ENCODE measurements at regions of chr12 and their contacts with region 1.

Region 1: GRCh38 chr12:47837190-47838171 is 17.8 kb upstream of the HDAC7 start:
- DNase-seq: peak; percentile 70
- H3K4me3 Mint-ChIP-seq: no peak overlapping the region
- H3K27ac Mint-ChIP-seq: no peak overlapping the region
- H3K4me1 Mint-ChIP-seq: peaks cover 61% of the 10 kb centered on the region
- H3K27me3 Mint-ChIP-seq: no peaks in the 10 kb centered on the region

Region 2: GRCh38 chr12:47672068-47672467 is 165.4 kb before region 1 on chr12:
- CTCF ChIA-PET with region 1: no interaction called
- POLR2A ChIA-PET with region 1: no interaction called
- DNase-seq: no peak
- H3K4me3 Mint-ChIP-seq: no peak overlapping the region
- H3K27ac Mint-ChIP-seq: no peak overlapping the region
- H3K4me1 Mint-ChIP-seq: peaks cover 13% of the 10 kb centered on the region
- H3K27me3 Mint-ChIP-seq: no peaks in the 10 kb centered on the region

Region 3: DNA sequence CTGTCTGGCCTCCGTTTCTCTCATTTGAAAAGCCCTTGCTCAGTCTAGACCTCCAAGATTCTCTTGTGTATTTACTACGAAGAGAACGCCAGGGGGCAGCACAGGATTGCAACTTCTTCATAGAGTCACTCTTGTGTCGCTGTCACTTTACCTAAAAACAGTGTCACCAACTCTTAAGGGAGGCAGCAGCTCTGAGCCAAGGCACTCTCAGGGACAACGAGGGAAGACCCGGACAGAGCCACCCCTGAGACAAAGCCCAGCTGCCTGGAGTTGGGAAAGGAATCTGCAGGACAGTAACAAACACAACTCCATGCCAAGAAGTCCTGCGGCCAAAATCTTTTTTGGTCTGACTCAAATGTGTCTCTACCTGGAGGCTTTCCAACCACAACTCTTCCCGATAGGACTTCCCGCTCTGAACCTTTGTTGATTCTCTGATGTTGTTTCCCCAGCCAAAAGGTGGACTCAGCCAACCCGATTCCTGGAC is 122.0 kb before region 1 on chr12:
- CTCF ChIA-PET with region 1: interaction called, 19 read pairs
- POLR2A ChIA-PET with region 1: interaction called, 9 read pairs
- DNase-seq: peak; percentile 81
- H3K4me3 Mint-ChIP-seq: no peak overlapping the region
- H3K27ac Mint-ChIP-seq: no peak overlapping the region
- H3K4me1 Mint-ChIP-seq: peaks cover 22% of the 10 kb centered on the region
- H3K27me3 Mint-ChIP-seq: no peaks in the 10 kb centered on the region

Region 4: GRCh38 chr12:47773062-47773857 is 64.2 kb before region 1 on chr12 and contains the start of gene SLC48A1:
- CTCF ChIA-PET with region 1: interaction called, 284 read pairs
- POLR2A ChIA-PET with region 1: interaction called, 55 read pairs
- DNase-seq: peak; percentile 75
- H3K4me3 Mint-ChIP-seq: peak within 1 kb of the TSS; percentile 91
- H3K27ac Mint-ChIP-seq: peak within 1 kb of the TSS; percentile 36
- H3K4me1 Mint-ChIP-seq: peaks cover 45% of the 10 kb centered on the region
- H3K27me3 Mint-ChIP-seq: peaks cover 5% of the 10 kb centered on the region
- total RNA-seq, gene SLC48A1: 19.4 to 22.6 TPM

Region 5: GRCh38 chr12:47812797-47813510 is 24.5 kb before region 1 on chr12:
- CTCF ChIA-PET with region 1: interaction called, 578 read pairs
- POLR2A ChIA-PET with region 1: interaction called, 1,018 read pairs
- DNase-seq: peak; percentile 96
- H3K4me3 Mint-ChIP-seq: peak overlapping the region; percentile 89
- H3K27ac Mint-ChIP-seq: peak overlapping the region; percentile 93
- H3K4me1 Mint-ChIP-seq: peaks cover 82% of the 10 kb centered on the region
- H3K27me3 Mint-ChIP-seq: no peaks in the 10 kb centered on the region

Region 6: DNA sequence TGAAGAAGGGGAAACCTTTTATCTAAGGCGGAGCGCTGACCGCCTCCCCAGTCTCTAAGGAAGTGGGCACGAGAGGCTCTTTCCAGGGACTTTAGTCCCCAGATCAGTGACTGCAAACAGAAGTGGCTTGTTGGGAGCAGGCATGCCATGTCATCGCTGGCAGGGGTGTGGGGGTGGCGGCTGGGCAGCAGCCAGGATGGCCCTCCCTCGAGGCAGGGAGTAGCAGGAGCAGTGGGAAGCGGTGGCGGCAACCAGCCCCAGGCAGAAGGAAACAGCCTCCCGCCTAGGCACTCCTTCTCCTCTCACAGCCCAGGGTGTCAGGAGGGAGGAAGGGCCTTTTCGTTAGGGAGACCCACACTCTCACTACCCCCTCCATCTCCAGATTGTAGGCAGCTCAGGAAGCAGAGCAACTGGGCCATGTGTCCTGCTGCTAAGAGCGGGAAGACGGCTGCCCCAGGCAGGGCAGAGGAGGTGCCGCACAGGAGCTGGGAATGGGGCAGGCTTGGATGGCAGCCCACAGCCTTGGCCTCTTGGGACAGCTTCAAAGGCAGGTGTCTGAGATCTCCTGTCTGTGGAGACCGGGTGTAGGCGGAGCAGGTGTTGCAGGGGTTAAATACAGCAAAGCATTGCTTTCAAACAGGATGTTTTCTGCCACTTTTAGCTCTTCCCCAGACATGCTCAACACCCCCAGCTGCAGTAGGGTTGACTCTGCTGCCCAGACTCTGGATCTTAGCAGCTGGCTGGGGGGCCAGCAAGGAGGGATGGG is 45.5 kb after region 1 on chr12:
- CTCF ChIA-PET with region 1: interaction called, 28 read pairs
- POLR2A ChIA-PET with region 1: interaction called, 17 read pairs
- DNase-seq: peak; percentile 59
- H3K4me3 Mint-ChIP-seq: peak overlapping the region; percentile 80
- H3K27ac Mint-ChIP-seq: peak overlapping the region; percentile 98
- H3K4me1 Mint-ChIP-seq: peaks cover 83% of the 10 kb centered on the region
- H3K27me3 Mint-ChIP-seq: no peaks in the 10 kb centered on the region

Region 7: DNA sequence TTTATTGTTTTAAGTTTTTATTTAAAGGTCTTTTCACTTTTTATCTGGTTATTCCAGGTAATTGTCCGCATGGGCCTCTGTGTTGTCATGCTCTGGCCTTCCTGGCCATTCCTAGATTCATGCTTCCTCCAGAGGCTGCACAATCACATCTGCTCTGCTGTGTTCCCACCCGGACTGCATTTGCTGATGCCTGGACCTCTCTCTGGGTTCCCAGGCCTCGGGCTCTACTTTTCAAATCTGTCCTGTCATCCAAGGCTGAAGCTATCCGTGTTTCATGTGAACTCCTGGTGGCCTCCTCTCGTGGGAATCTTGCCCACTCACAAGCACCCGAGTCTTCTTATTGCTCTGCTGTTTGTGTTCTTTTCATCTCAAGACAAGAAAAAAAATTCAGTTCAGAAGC is 83.4 kb after region 1 on chr12:
- CTCF ChIA-PET with region 1: no interaction called
- POLR2A ChIA-PET with region 1: no interaction called
- DNase-seq: no peak
- H3K4me3 Mint-ChIP-seq: no peak overlapping the region
- H3K27ac Mint-ChIP-seq: no peak overlapping the region
- H3K4me1 Mint-ChIP-seq: peaks cover 1% of the 10 kb centered on the region
- H3K27me3 Mint-ChIP-seq: peaks cover 39% of the 10 kb centered on the region

Measured in activated CD4-positive, alpha-beta memory T cell treated with anti-CD3 and anti-CD28 coated beads, Interleukin-2, amount 10 ng/mL, durations not matched to agents 7 days and 5 days (primary cell).